ENCODE measurements at regions of chr10 and their contacts with region 1.

Region 1: DNA sequence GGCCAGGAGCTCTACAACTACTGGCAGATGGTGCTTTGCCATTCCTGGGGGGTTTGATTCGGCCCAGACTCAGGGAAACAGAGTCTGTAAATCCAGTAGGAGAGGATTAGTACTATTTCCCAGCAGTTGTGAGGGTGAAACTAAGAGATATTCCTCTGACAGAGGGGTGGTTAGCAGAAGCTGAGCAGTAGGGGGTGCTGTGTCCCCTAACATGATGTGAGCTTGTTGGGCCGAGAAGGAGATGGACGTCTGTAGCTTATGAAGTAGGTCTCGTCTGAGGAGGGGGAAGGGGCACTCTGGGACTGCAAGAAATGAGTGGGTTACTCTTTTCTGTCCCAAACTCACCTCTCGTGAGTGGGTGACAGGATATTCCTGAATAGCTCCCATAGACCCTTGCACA is 179.2 kb upstream of the MBL2 start:
- DNase-seq: peak; percentile 66
- H3K4me3 Mint-ChIP-seq: no peak overlapping the region
- H3K27ac Mint-ChIP-seq: no peak overlapping the region
- H3K4me1 Mint-ChIP-seq: no peaks in the 10 kb centered on the region
- H3K27me3 Mint-ChIP-seq: no peaks in the 10 kb centered on the region
- CTCF ChIP-seq: peak; percentile 33

Region 2: GRCh38 chr10:52918714-52919305 is 33.0 kb before region 1 on chr10:
- CTCF ChIA-PET with region 1: no interaction called
- POLR2A ChIA-PET with region 1: no interaction called
- intact Hi-C with region 1: no loop called
- DNase-seq: no peak
- H3K4me3 Mint-ChIP-seq: no peak overlapping the region
- H3K27ac Mint-ChIP-seq: no peak overlapping the region
- H3K4me1 Mint-ChIP-seq: no peaks in the 10 kb centered on the region
- H3K27me3 Mint-ChIP-seq: no peaks in the 10 kb centered on the region
- CTCF ChIP-seq: no peak

Region 3: DNA sequence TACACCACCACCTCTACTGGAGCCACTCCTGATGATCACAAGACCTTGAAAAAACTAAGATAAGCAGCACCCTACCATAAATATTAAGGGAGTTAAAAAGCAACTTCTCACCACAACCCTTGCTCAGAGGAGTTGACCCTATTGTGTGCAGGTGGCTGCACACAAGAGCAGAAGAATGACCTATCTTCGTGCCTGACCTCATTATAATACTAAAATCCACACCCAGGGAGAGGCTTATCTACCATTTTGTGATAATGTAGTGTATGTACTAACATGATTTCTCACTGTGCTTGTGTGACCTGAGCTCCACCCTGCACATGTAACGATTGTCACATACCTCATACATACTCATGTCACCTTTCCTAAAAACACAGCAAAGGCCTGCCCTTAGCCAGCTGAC is 25.8 kb after region 1 on chr10:
- CTCF ChIA-PET with region 1: no interaction called
- POLR2A ChIA-PET with region 1: no interaction called
- intact Hi-C with region 1: no loop called
- DNase-seq: no peak
- H3K4me3 Mint-ChIP-seq: no peak overlapping the region
- H3K27ac Mint-ChIP-seq: no peak overlapping the region
- H3K4me1 Mint-ChIP-seq: no peaks in the 10 kb centered on the region
- H3K27me3 Mint-ChIP-seq: no peaks in the 10 kb centered on the region
- CTCF ChIP-seq: no peak

Region 4: GRCh38 chr10:53209944-53210611 is 258.3 kb after region 1 on chr10:
- CTCF ChIA-PET with region 1: no interaction called
- POLR2A ChIA-PET with region 1: no interaction called
- intact Hi-C with region 1: loop called (anchors 10 kb)
- DNase-seq: peak; percentile 49
- H3K4me3 Mint-ChIP-seq: no peak overlapping the region
- H3K27ac Mint-ChIP-seq: no peak overlapping the region
- H3K4me1 Mint-ChIP-seq: no peaks in the 10 kb centered on the region
- H3K27me3 Mint-ChIP-seq: no peaks in the 10 kb centered on the region
- CTCF ChIP-seq: peak; percentile 45

Region 5: DNA sequence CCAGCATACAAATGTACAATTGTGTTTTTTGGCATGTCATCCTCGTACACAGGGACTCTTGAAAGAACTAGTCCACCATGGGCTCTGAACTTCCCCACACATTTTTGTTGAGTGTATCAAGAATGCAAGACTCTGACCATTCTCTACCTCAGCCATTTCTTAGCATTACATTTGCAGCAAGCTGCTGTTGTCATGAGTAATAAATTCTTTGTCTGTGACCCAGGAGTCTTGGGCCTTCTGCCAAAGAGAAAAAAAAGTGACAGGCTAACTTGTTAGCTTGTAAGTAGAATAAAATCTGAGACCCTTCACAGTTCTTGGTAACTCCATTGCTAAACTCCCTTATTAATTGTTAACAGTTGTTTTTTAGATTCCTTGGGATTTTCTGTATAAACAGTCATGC is 363.1 kb after region 1 on chr10:
- CTCF ChIA-PET with region 1: no interaction called
- POLR2A ChIA-PET with region 1: no interaction called
- intact Hi-C with region 1: loop called (anchors 10 kb)
- DNase-seq: peak; percentile 86
- H3K4me3 Mint-ChIP-seq: no peak overlapping the region
- H3K27ac Mint-ChIP-seq: peak overlapping the region; percentile 16
- H3K4me1 Mint-ChIP-seq: peaks cover 6% of the 10 kb centered on the region
- H3K27me3 Mint-ChIP-seq: no peaks in the 10 kb centered on the region
- CTCF ChIP-seq: no peak